ENCODE measurements at regions of chr1 and their contacts with region 1.

Region 1: GRCh38 chr1:97050501-97050900 is 328.9 kb downstream of the PTBP2 start:
- DNase-seq: no peak
- H3K4me3 ChIP-seq: no peak overlapping the region
- H3K27ac ChIP-seq: no peak overlapping the region
- H3K4me1 ChIP-seq: no peaks in the 10 kb centered on the region
- H3K27me3 ChIP-seq: no peaks in the 10 kb centered on the region
- CTCF ChIP-seq: peak in 1 of 2 experiments; percentile 7

Region 2: GRCh38 chr1:98059620-98060019 is 1009.1 kb after region 1 on chr1:
- intact Hi-C with region 1: loop called (anchors 10 kb)
- DNase-seq: no peak
- H3K4me3 ChIP-seq: no peak overlapping the region
- H3K27ac ChIP-seq: no peak overlapping the region
- H3K4me1 ChIP-seq: no peaks in the 10 kb centered on the region
- H3K27me3 ChIP-seq: peaks cover 0 to 5% of the 10 kb centered on the region in 2 donors
- CTCF ChIP-seq: no peak